Activated CD8-positive, alpha-beta T cell treated with anti-CD3 and anti-CD28 coated beads for 36 hours (primary cell): ENCODE measurements at regions of chr1 and their contacts with region 1.

Region 1: DNA sequence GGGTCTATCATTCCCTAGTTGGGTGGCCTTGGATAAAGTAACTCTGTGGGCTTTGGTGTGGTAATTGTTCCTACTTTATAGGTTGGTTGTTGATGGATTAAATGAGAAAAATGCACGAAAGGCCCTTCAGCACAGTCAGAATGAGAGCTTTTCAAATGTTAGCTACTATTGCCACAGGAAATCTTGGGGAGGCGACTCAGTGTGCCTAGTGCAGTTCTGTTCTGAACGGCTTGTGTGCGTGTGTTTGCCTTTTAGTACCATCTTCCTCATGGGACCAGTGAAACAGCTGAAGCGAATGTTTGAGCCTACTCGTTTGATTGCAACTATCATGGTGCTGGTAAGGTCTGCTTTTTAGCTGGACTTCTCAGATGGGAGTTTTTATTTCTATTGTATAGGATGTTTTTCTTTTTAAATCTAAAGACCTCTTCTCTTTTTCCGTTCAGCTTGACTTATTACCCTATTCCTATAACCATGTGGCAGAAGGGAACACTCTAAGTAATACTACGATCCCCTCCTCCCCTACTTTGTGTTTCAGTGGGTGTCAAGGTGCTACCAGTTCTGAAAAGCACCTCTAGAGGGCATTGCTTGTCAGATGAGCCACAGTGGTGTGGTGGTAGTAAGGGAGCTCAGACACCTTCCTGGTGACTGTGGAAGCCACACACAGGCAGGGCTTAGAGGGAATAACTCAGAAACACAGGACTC is 9.2 kb downstream of the SFT2D2 start:
- DNase-seq: peak; percentile 59
- ATAC-seq: peak; percentile 85
- H3K4me3 Mint-ChIP-seq: no peak overlapping the region
- H3K27ac Mint-ChIP-seq: no peak overlapping the region
- H3K4me1 Mint-ChIP-seq: peaks cover 46% of the 10 kb centered on the region
- H3K27me3 Mint-ChIP-seq: no peaks in the 10 kb centered on the region
- CTCF ChIP-seq: peak; percentile 73

Region 2: DNA sequence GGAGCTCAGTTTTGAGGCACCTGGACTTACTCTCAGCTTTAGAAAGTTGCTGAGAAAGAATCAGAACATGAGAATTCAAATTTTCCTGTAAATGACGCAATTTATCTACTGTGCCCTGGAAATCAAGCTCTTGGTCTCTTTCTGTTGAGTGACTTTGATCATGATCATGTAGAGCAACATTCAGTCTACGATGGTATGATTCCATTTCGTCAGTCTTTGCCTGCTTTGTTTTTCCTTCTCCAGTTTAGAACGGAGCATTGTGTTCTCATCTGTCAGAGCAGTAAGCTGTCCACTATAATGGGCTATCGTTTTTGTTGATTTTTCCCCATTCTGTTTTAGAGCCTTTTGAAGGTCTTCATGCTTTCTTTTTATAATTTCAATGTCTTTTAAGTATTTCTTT is 11.5 kb after region 1 on chr1:
- CTCF ChIA-PET with region 1: interaction called, 15 read pairs
- POLR2A ChIA-PET with region 1: interaction called, 3 read pairs
- intact Hi-C with region 1: no loop called
- DNase-seq: no peak
- ATAC-seq: no peak
- H3K4me3 Mint-ChIP-seq: no peak overlapping the region
- H3K27ac Mint-ChIP-seq: no peak overlapping the region
- H3K4me1 Mint-ChIP-seq: peaks cover 33% of the 10 kb centered on the region
- H3K27me3 Mint-ChIP-seq: no peaks in the 10 kb centered on the region
- CTCF ChIP-seq: no peak

Region 3: GRCh38 chr1:168256164-168256563 is 21.2 kb after region 1 on chr1:
- CTCF ChIA-PET with region 1: interaction called, 11 read pairs
- POLR2A ChIA-PET with region 1: no interaction called
- intact Hi-C with region 1: no loop called
- DNase-seq: no peak
- ATAC-seq: no peak
- H3K4me3 Mint-ChIP-seq: no peak overlapping the region
- H3K27ac Mint-ChIP-seq: no peak overlapping the region
- H3K4me1 Mint-ChIP-seq: peaks cover 22% of the 10 kb centered on the region
- H3K27me3 Mint-ChIP-seq: no peaks in the 10 kb centered on the region
- CTCF ChIP-seq: no peak